ENCODE measurements at regions of chr6 and their contacts with region 1.

Region 1: GRCh38 chr6:108113557-108114519 is 39.3 kb upstream of the OSTM1 start:
- DNase-seq: peak; percentile 29
- ATAC-seq: no peak
- H3K4me3 Mint-ChIP-seq: peak overlapping the region; percentile 39
- H3K27ac Mint-ChIP-seq: no peak overlapping the region
- H3K4me1 Mint-ChIP-seq: peaks cover 39% of the 10 kb centered on the region
- H3K27me3 Mint-ChIP-seq: peaks cover 73% of the 10 kb centered on the region
- CTCF ChIP-seq: peak; percentile 78

Region 2: DNA sequence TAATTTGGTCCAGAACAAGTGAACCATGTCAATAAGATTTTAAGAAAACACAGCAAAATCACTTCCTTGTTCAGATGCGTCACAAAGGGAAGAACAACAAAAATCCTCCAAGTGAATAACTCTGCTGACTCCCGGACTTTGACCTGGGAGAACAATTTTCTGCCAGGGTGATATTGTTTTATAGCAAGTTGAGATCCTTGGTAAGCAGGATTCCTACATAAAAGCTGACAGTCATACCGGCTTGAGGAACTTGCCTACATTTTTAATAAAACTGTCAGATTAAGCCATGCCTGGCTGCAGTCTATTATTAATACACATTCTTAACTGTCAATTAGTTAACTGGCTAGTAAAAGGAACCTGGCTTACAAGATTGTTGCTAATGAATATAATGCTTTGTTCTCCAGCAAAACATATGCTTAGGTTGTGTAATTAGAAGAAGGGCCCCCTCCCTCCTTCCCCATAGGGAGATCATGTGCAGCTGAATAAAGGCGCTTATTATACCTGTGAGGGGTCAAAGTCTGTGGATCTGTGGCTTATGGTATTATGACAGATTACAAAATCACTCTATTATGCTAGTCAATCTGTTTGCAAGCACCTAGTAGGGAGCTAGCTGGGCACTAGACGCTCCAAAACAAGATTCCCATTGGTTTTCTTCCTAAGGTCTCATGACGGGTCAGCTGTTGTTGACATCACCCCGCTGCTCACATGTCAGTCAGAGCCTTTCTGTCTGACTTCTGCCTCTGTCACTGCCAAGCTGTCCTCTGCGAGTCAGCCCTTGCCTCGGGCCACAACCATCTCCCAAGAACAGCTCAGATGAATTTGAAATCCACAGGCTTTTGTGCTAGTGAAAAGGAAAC is 111.2 kb before region 1 on chr6:
- CTCF ChIA-PET with region 1: no interaction called
- POLR2A ChIA-PET with region 1: no interaction called
- intact Hi-C with region 1: no loop called
- DNase-seq: no peak
- ATAC-seq: no peak
- H3K4me3 Mint-ChIP-seq: no peak overlapping the region
- H3K27ac Mint-ChIP-seq: no peak overlapping the region
- H3K4me1 Mint-ChIP-seq: no peaks in the 10 kb centered on the region
- H3K27me3 Mint-ChIP-seq: no peaks in the 10 kb centered on the region
- CTCF ChIP-seq: no peak

Region 3: GRCh38 chr6:108168501-108169463 is 54.9 kb after region 1 on chr6:
- CTCF ChIA-PET with region 1: interaction called, 5 read pairs
- POLR2A ChIA-PET with region 1: interaction called, 4 read pairs
- intact Hi-C with region 1: loop called (anchors 2 kb)
- DNase-seq: peak; percentile 35
- ATAC-seq: peak; percentile 41
- H3K4me3 Mint-ChIP-seq: peak overlapping the region; percentile 36
- H3K27ac Mint-ChIP-seq: no peak overlapping the region
- H3K4me1 Mint-ChIP-seq: peaks cover 46% of the 10 kb centered on the region
- H3K27me3 Mint-ChIP-seq: peaks cover 83% of the 10 kb centered on the region
- CTCF ChIP-seq: no peak

Region 4: DNA sequence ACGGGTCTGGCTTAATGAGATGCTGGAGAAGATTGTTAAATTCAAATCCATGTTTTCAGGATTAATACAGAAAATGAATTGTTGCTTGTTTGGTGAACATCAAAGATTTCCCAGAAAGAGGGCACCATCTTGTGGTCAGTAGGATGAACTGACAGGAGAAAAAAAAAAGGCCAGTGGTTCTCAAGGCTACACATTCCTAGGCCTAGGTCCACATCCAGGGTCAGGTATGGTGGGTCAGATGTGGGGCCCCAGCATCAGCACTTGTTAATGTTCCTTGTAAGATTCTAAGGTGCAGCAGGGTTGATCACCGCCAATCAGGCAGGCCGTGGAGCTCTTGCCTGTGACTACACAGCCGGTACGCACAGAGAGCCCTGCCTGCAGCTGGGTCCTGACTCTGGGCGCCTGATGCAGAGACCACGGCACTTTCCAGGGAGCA is 412.9 kb after region 1 on chr6:
- CTCF ChIA-PET with region 1: interaction called, 6 read pairs
- POLR2A ChIA-PET with region 1: interaction called, 4 read pairs
- intact Hi-C with region 1: loop called (anchors 10 kb)
- DNase-seq: no peak
- ATAC-seq: no peak
- H3K4me3 Mint-ChIP-seq: no peak overlapping the region
- H3K27ac Mint-ChIP-seq: no peak overlapping the region
- H3K4me1 Mint-ChIP-seq: no peaks in the 10 kb centered on the region
- H3K27me3 Mint-ChIP-seq: no peaks in the 10 kb centered on the region
- CTCF ChIP-seq: peak; percentile 83

Measured in activated CD8-positive, alpha-beta T cell treated with anti-CD3 and anti-CD28 coated beads for 36 hours (primary cell).